PC-9 (cell line): ENCODE measurements at regions of chr17 and their contacts with region 1.

Region 1: GRCh38 chr17:38444151-38444550 is 15.9 kb downstream of the ARHGAP23 start:
- DNase-seq: peak in 1 of 2 experiments; percentile 72
- H3K4me3 ChIP-seq: no peak overlapping the region
- H3K27ac ChIP-seq: no peak overlapping the region
- H3K4me1 ChIP-seq: peaks cover 48% of the 10 kb centered on the region
- H3K27me3 ChIP-seq: no peaks in the 10 kb centered on the region
- CTCF ChIP-seq: peak; percentile 91

Region 2: DNA sequence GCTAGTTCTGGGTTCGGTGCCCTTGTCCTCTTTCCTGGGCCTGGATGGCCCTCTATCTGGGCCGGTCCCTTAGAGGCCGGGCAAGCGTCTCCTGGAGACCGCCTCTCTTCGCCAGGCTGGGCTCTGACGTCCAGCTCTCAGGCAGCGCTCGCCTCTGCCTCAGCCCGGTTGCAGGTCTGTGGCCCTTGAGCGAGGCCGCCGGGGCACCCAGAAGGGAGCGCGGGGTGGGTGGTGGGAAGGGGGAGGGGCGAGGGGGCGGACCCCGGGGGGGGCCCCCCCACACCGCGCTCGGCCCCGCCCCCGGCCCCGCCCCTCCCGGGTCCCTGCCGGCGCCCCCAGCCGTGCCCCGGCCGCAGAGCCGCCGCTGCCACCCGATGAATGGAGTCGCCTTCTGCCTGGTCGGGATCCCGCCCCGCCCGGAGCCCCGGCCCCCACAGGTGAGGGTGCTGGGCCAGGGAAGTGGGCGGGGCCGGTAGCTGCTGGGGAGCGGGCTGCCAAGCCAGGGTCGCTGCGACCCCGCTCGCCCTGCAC is 16.0 kb before region 1 on chr17 and contains the start of gene ARHGAP23:
- CTCF ChIA-PET with region 1: interaction called, 4 read pairs
- POLR2A ChIA-PET with region 1: interaction called, 5 read pairs
- intact Hi-C with region 1: loop called (anchors 1 kb)
- DNase-seq: peak; percentile 54 to 69
- H3K4me3 ChIP-seq: peak within 1 kb of the TSS; percentile 84
- H3K27ac ChIP-seq: 0 out of 2 replicates have a peak within 1 kb of the TSS, but pooled peaks have one; percentile 4
- H3K4me1 ChIP-seq: peaks cover 34% of the 10 kb centered on the region
- H3K27me3 ChIP-seq: no peaks in the 10 kb centered on the region
- CTCF ChIP-seq: no peak
- total RNA-seq, gene ARHGAP23: 129 and 137 TPM in 2 replicates

Region 3: GRCh38 chr17:38485146-38485468 is 41.0 kb after region 1 on chr17:
- CTCF ChIA-PET with region 1: interaction called, 3 read pairs
- POLR2A ChIA-PET with region 1: no interaction called
- intact Hi-C with region 1: loop called (anchors 2 kb)
- DNase-seq: no peak
- H3K4me3 ChIP-seq: no peak overlapping the region
- H3K27ac ChIP-seq: no peak overlapping the region
- H3K4me1 ChIP-seq: no peaks in the 10 kb centered on the region
- H3K27me3 ChIP-seq: no peaks in the 10 kb centered on the region
- CTCF ChIP-seq: no peak; the same call in 1 of the 2 replicates

Region 4: GRCh38 chr17:38592487-38592886 is 148.3 kb after region 1 on chr17:
- CTCF ChIA-PET with region 1: interaction called, 26 read pairs
- POLR2A ChIA-PET with region 1: no interaction called
- intact Hi-C with region 1: no loop called
- DNase-seq: no peak
- H3K4me3 ChIP-seq: no peak overlapping the region
- H3K27ac ChIP-seq: no peak overlapping the region
- H3K4me1 ChIP-seq: peaks cover 39% of the 10 kb centered on the region
- H3K27me3 ChIP-seq: no peaks in the 10 kb centered on the region
- CTCF ChIP-seq: no peak